Heart left ventricle (tissue), 16 donors: ENCODE measurements at regions of chr21 and their contacts with region 1.

Region 1: DNA sequence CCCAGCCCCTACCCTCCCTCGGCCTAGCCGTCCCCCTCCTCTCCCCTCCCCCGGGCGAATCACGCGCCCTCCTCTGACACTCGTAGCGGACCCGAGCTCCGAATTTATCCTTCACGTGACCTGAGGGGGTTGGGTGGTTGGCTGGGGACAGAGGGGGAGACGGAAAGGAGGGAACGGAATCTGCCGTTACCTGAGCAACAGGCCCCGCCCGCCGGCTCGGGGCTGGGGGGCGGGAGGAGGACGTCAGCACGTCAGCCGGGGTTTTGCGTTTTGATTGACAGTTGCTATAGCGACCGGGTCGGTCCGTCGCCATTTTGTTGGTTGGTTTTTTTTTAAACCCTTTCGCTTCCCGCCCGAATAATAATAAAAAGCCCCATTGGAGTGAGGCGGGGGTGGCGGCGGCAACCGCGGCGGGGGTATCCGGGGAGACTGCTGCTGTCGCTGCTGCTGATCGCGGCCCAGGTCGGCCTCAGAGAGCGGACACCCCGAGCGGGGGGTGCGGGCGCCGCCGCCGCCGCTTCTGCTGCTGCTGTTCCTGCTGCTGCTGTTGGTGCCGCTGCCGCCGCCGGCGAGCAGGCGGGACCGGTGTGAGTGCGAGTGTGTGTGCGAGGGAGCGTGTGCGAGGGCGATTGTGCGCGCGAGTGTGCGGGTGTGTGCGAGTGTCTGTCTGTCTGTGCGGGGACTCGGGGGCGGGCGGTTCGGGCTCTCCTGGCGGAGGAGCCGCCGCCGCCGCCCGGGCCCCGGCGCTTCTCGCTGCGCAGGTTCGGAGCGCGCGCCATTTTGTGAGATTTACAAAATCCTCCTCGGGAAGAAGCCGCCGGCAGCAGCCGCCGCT is at the start of gene DYRK1A:
- DNase-seq: peak; percentile 98 to 99 (median 99)
- ATAC-seq: peak; percentile 91 to 98 (median 96)
- H3K4me3 ChIP-seq: peak within 1 kb of the TSS; percentile 77 to 96 (median 88)
- H3K27ac ChIP-seq: peak within 1 kb of the TSS; percentile 98 to 100 (median 100)
- H3K4me1 ChIP-seq: peaks cover 9 to 45% (median 35%) of the 10 kb centered on the region in 12 donors
- H3K27me3 ChIP-seq: no peaks in the 10 kb centered on the region
- CTCF ChIP-seq: peak in 2 of 12 donors; percentile 7 to 16
- POLR2A ChIP-seq: peak; percentile 19 to 59
- total RNA-seq, gene DYRK1A: 59.3 to 96.6 (median 72.1) TPM

Region 2: DNA sequence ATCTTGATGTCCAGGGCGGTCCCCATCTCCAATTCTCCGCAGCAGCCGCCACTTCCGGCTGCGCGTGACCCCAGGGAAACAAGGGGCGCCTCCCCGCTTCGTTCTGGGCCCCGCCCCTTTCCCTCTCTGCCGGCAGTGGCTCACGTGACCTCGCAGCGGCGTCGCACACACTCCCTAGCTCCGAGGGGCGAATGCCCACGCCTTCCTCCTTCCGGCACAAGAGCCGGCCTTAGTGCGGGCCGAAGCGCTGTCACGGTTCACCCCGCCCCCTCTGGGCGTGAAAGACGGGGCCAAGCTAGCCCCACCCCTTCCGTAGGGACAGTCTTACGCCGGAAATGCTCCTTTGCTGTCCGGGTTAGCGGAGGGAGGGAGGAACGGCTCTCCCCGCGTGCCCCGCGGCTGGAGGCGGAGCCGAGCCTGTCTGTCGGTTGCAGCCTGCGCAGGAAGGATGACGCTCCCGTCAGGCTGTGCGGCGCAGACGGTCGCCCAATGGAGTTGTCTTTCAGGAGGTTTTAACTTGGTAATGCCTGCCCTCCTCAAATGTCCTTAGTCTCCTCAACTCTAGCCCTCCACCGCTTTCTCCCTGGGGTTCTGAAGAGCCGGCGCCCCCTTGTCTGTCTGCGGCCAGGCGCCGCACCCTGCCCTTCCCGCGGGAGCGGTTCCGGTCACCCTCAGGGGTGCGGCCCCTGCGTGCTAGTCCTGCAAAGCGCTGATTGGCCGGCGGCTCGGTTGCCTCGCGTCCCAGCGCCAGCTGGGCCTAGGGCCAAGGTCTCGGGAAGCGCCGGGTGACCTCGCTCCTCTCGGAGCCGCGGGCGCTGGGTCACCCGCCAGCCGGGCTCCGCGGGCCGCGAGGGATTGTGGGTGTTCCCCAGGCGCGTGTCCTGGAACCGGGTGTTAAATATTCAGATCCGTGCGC is 99.2 kb before region 1 on chr21 and contains the start of gene VPS26C:
- intact Hi-C with region 1: loop called in 9 of 10 experiments (anchors 1 to 5 kb)
- DNase-seq: peak; percentile 98 to 99 (median 99)
- ATAC-seq: peak; percentile 95 to 98 (median 97)
- H3K4me3 ChIP-seq: peak within 1 kb of the TSS; percentile 69 to 95 (median 90)
- H3K27ac ChIP-seq: peak within 1 kb of the TSS; percentile 91 to 100 (median 96)
- H3K4me1 ChIP-seq: peaks cover 0 to 48% (median 27%) of the 10 kb centered on the region in 12 donors
- H3K27me3 ChIP-seq: no peaks in the 10 kb centered on the region
- CTCF ChIP-seq: peak in 2 of 12 donors; percentile 7 to 11
- POLR2A ChIP-seq: peak; percentile 16 to 68
- total RNA-seq, gene VPS26C: 42.1 to 88.6 (median 53.5) TPM

Region 3: GRCh38 chr21:37281993-37282392 is 84.7 kb before region 1 on chr21:
- intact Hi-C with region 1: no loop called
- DNase-seq: no peak
- ATAC-seq: peak in 1 of 4 donors; percentile 39
- H3K4me3 ChIP-seq: peak overlapping the region in 2 of 12 donors; percentile 15 to 18
- H3K27ac ChIP-seq: no peak overlapping the region
- H3K4me1 ChIP-seq: no peaks in the 10 kb centered on the region
- H3K27me3 ChIP-seq: no peaks in the 10 kb centered on the region
- CTCF ChIP-seq: no peak
- POLR2A ChIP-seq: no peak

Region 4: DNA sequence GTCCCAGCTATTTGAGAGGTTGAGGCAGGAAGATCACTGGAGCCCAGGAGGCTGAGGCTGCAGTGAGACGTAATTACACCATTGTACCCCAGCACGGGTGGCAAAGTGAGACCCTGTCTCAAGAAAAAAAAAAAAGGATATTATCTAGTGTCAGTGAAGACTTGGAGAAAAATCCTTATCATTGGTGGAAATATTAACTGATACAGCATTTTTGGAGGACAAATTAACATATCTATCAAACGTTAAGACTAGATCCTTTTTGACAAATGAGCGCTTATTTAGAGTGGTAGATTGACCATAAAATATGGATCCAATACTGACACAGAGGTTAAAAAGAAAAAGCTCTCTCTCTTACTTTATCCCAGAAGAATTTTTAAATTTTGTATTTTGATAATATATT is 35.3 kb before region 1 on chr21:
- intact Hi-C with region 1: no loop called
- DNase-seq: no peak
- ATAC-seq: no peak
- H3K4me3 ChIP-seq: no peak overlapping the region
- H3K27ac ChIP-seq: no peak overlapping the region
- H3K4me1 ChIP-seq: no peaks in the 10 kb centered on the region
- H3K27me3 ChIP-seq: no peaks in the 10 kb centered on the region
- CTCF ChIP-seq: no peak
- POLR2A ChIP-seq: no peak

Region 5: GRCh38 chr21:37398697-37399096 is 32.0 kb after region 1 on chr21:
- intact Hi-C with region 1: no loop called
- DNase-seq: no peak
- ATAC-seq: no peak
- H3K4me3 ChIP-seq: no peak overlapping the region
- H3K27ac ChIP-seq: no peak overlapping the region
- H3K4me1 ChIP-seq: peaks cover 0 to 81% (median 55%) of the 10 kb centered on the region in 12 donors
- H3K27me3 ChIP-seq: no peaks in the 10 kb centered on the region
- CTCF ChIP-seq: no peak
- POLR2A ChIP-seq: no peak

Region 6: GRCh38 chr21:37415939-37416338 is 49.2 kb after region 1 on chr21:
- intact Hi-C with region 1: loop called in 3 of 10 experiments (anchors 5 to 10 kb)
- DNase-seq: no peak
- ATAC-seq: no peak
- H3K4me3 ChIP-seq: no peak overlapping the region
- H3K27ac ChIP-seq: peak overlapping the region in 7 of 12 donors; percentile 1 to 36 (median 13)
- H3K4me1 ChIP-seq: peaks cover 11 to 97% (median 85%) of the 10 kb centered on the region in 12 donors
- H3K27me3 ChIP-seq: no peaks in the 10 kb centered on the region
- CTCF ChIP-seq: no peak
- POLR2A ChIP-seq: no peak

Region 7: DNA sequence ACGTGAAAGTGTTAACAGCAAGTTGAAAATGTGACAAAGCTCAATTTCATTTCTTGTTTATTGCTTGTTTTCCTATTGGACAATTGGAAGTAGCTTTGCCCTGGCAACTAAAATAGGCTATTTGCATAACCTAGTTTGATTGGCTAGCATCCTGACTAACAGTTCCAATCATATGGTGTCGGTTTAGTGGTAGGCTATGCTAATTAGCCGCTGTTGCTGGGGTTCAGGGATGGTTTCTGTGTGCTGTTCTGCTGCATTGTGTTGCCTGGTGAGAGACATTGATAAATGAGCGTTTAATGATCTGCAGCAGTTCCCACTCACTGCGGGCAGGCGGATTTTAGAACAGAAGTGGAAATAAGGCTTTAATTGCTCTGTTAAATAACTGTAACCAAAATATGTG is 68.4 kb after region 1 on chr21:
- intact Hi-C with region 1: loop called in 3 of 10 experiments (anchors 5 to 10 kb)
- DNase-seq: peak in 4 of 5 donors; percentile 62 to 74 (median 71)
- ATAC-seq: peak; percentile 95 to 99 (median 98)
- H3K4me3 ChIP-seq: peak overlapping the region in 6 of 12 donors; percentile 3 to 20 (median 10)
- H3K27ac ChIP-seq: peak overlapping the region in 10 of 12 donors; percentile 25 to 67 (median 54)
- H3K4me1 ChIP-seq: peaks cover 14 to 90% (median 70%) of the 10 kb centered on the region in 12 donors
- H3K27me3 ChIP-seq: no peaks in the 10 kb centered on the region
- CTCF ChIP-seq: no peak
- POLR2A ChIP-seq: no peak

Region 8: GRCh38 chr21:37463083-37463801 is 96.5 kb after region 1 on chr21:
- intact Hi-C with region 1: loop called in 5 of 10 experiments (anchors 5 to 10 kb)
- DNase-seq: no peak
- ATAC-seq: peak; percentile 55 to 74 (median 67)
- H3K4me3 ChIP-seq: peak overlapping the region in 5 of 12 donors; percentile 7 to 28 (median 26)
- H3K27ac ChIP-seq: peak overlapping the region in 3 of 12 donors; percentile 11 to 54 (median 25)
- H3K4me1 ChIP-seq: peaks cover 10 to 85% (median 61%) of the 10 kb centered on the region in 12 donors
- H3K27me3 ChIP-seq: no peaks in the 10 kb centered on the region
- CTCF ChIP-seq: peak; percentile 22 to 72 (median 54)
- POLR2A ChIP-seq: no peak

Region 9: DNA sequence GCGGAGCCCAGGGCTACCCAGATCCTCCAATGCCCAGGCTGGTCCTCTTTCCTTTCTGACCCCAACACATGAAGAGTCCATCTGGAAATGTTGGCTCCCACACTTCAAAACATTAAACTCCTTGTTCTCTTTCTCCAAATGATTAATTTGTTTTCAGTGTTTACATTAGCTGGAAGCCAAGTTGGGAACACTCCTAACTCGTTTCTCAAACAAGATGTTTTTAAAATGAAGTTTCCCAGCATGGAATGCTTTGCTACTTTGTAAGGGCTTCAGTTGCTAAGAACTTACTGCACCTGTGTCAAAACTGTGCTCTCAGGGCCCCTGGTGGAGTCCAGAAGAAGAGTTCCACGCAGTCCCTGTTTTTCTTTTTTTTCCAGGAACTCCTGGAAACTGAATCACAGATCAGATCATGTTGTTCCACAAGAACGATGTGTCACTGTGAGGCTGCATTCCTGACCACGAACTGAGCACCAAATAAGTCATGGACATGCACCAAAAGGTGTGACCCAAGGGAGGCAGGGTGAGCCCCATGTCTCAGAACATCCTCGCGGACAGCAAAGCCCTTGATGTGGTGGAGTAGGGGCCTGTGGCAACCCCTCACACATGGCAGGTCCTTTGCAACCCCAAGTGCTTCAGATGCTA is 292.2 kb after region 1 on chr21:
- intact Hi-C with region 1: no loop called
- DNase-seq: no peak
- ATAC-seq: peak; percentile 37 to 58 (median 50)
- H3K4me3 ChIP-seq: no peak overlapping the region
- H3K27ac ChIP-seq: peak overlapping the region in 3 of 12 donors; percentile 13 to 76 (median 27)
- H3K4me1 ChIP-seq: peaks cover 0 to 19% (median 7%) of the 10 kb centered on the region in 12 donors
- H3K27me3 ChIP-seq: no peaks in the 10 kb centered on the region
- CTCF ChIP-seq: peak in 4 of 12 donors; percentile 23 to 26 (median 24)
- POLR2A ChIP-seq: no peak